ENCODE measurements at regions of chr3 and their contacts with region 1.

Region 1: GRCh38 chr3:150495563-150496168 is 50.6 kb downstream of the SERP1 start:
- DNase-seq: no peak
- H3K4me3 ChIP-seq: no peak overlapping the region
- H3K27ac ChIP-seq: no peak overlapping the region
- H3K4me1 ChIP-seq: no peaks in the 10 kb centered on the region
- H3K27me3 ChIP-seq: no peaks in the 10 kb centered on the region
- CTCF ChIP-seq: peak; percentile 85

Region 2: DNA sequence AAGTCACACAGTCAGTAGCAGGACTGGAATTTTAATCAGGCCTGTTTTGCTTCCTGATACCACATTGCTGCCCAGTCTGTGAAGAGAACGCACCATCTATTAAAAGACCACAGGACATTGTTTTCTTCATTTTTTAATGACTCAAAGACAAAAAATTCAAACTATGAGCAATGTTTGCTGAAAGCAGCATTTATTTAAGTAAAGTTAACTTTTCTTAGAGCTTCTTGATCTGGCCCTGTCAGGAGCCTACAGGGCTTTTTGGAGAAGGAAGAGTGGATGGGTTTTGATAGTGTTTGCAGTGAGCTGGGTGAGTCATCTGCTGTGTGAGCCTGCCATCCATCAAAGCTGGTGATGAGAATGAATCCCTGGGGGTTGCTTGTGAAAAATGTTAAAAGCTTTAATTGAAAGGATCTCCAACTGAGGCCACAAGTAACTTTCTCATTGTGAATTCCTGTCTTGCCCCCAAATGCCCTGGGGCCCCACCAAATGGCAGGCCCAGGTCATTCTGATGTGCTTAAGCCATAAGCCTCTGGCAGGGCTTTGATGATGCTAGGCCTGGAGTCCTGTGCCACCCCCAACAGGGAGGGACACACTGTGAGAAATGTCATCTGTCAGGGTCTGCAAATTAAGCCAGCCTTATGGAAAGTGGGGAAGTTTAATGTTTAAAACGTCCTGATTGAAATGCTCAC is 388.8 kb before region 1 on chr3:
- intact Hi-C with region 1: no loop called
- DNase-seq: no peak
- H3K4me3 ChIP-seq: no peak overlapping the region
- H3K27ac ChIP-seq: no peak overlapping the region
- H3K4me1 ChIP-seq: peaks cover 5% of the 10 kb centered on the region
- H3K27me3 ChIP-seq: no peaks in the 10 kb centered on the region
- CTCF ChIP-seq: no peak

Region 3: GRCh38 chr3:150286390-150287147 is 209.1 kb before region 1 on chr3:
- intact Hi-C with region 1: loop called (anchors 5 kb)
- DNase-seq: no peak
- H3K4me3 ChIP-seq: no peak overlapping the region
- H3K27ac ChIP-seq: no peak overlapping the region
- H3K4me1 ChIP-seq: no peaks in the 10 kb centered on the region
- H3K27me3 ChIP-seq: no peaks in the 10 kb centered on the region
- CTCF ChIP-seq: peak; percentile 70

Region 4: DNA sequence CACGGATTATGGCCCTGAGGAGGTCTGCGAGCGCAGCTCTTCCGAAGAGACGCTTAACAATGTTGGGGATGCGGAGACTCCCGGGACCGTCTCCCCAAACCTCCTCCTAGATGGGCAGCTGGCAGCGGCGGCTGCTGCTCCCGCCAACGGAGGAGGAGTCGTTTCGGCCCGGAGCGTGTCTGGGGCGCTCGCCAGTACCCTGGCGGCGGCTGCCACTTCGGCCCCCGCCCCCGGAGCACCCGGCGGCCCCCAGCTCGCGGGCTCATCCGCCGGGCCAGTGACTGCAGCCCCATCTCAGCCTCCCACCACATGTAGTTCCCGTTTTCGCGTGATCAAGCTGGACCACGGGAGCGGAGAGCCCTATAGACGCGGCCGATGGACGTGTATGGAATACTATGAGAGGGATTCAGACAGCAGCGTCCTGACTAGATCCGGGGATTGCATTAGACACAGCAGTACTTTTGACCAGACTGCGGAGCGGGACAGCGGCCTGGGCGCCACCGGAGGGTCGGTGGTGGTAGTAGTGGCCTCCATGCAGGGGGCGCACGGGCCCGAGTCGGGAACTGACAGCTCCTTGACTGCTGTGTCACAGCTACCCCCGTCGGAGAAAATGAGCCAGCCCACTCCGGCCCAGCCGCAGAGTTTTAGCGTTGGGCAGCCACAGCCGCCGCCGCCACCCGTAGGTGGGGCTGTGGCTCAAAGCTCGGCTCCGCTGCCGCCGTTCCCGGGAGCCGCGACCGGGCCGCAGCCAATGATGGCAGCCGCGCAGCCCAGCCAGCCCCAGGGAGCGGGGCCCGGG is 86.0 kb before region 1 on chr3:
- intact Hi-C with region 1: loop called (anchors 10 kb)
- DNase-seq: peak; percentile 78
- H3K4me3 ChIP-seq: peak overlapping the region; percentile 88
- H3K27ac ChIP-seq: peak overlapping the region; percentile 100
- H3K4me1 ChIP-seq: peaks cover 78% of the 10 kb centered on the region
- H3K27me3 ChIP-seq: no peaks in the 10 kb centered on the region
- CTCF ChIP-seq: peak; percentile 68

Measured in left ventricle myocardium inferior (tissue), 1 donor.